HepG2 (cell line): ENCODE measurements at regions of chr3 and their contacts with region 1.

Region 1: DNA sequence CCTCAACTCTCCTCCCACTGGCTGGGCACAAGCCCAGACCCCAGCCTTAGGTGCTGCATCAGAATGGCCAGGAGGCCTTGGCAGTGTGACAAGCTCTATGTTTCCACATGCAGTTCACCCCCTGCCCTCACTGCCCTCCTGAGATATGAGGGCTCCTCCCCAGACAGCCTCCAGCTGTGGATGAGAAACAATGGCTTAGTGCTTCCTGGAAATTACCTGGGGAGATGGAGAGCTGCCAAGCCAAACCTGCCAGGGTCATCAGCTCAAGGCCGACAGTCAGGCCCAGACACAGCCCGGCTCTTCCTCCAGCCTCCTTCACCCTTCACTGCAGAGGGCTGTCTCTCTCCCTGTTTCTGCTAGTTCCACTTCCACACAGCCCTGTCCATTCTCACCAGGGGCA is 76.3 kb downstream of the MYLK start:
- DNase-seq: peak; percentile 80
- ATAC-seq: peak; percentile 75
- H3K4me3 ChIP-seq: peak overlapping the region in 2 of 3 experiments; percentile 20 to 48; a peak in 3 of 6 replicates
- H3K27ac ChIP-seq: peak overlapping the region; percentile 64
- H3K4me1 ChIP-seq: peaks cover 66% of the 10 kb centered on the region
- H3K27me3 ChIP-seq: no peaks in the 10 kb centered on the region
- CTCF ChIP-seq: no peak
- EP300 ChIP-seq: peak in 1 of 2 experiments; percentile 88; a peak in 2 of 4 replicates
- POLR2A ChIP-seq: no peak
- RAD21 ChIP-seq: no peak

Region 2: GRCh38 chr3:123750659-123751420 is 57.0 kb before region 1 on chr3:
- CTCF ChIA-PET with region 1: no interaction called
- POLR2A ChIA-PET with region 1: interaction called, 12 read pairs
- in situ Hi-C with region 1: loop called (anchors 5 kb)
- intact Hi-C with region 1: no loop called
- DNase-seq: peak; percentile 93
- ATAC-seq: peak; percentile 80
- H3K4me3 ChIP-seq: no peak overlapping the region
- H3K27ac ChIP-seq: peak overlapping the region; percentile 76
- H3K4me1 ChIP-seq: peaks cover 67% of the 10 kb centered on the region
- H3K27me3 ChIP-seq: no peaks in the 10 kb centered on the region
- CTCF ChIP-seq: peak; percentile 58
- EP300 ChIP-seq: peak; percentile 68 to 79; a peak in 3 of 4 replicates
- POLR2A ChIP-seq: no peak
- RAD21 ChIP-seq: 0 out of 2 replicates have a peak, but pooled peaks have one; percentile 51

Region 3: DNA sequence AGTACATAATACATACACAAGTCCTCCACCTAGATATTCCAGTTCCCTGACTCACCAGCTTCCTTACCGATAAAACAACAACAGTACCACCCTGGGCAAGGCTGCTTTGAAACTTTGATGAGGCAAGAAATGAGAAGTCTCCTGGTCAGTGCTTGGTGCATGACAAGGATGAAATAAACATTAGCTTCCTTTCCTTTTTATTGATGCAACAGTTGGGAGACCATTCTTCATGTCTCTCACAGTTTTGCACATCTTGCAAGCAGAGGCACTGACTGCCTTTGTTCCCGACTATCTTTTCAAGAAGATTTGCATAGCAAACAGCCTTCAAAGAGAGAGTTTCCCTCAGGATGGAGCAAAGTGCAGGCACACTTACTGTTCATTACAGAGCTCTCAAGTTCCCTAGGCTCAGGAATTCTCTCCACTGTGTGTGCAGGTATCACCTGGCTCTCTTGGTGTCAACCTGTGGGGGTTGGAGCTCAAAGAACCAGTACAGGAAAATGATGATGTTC is 11.2 kb after region 1 on chr3:
- CTCF ChIA-PET with region 1: no interaction called
- POLR2A ChIA-PET with region 1: interaction called, 18 read pairs
- in situ Hi-C with region 1: no loop called
- intact Hi-C with region 1: no loop called
- DNase-seq: peak; percentile 77
- ATAC-seq: peak; percentile 95
- H3K4me3 ChIP-seq: peak overlapping the region in 1 of 3 experiments; percentile 2; a peak in 1 of 6 replicates
- H3K27ac ChIP-seq: peak overlapping the region; percentile 30
- H3K4me1 ChIP-seq: peaks cover 35% of the 10 kb centered on the region
- H3K27me3 ChIP-seq: no peaks in the 10 kb centered on the region
- CTCF ChIP-seq: no peak
- EP300 ChIP-seq: peak in 1 of 2 experiments; percentile 74; a peak in 1 of 4 replicates
- POLR2A ChIP-seq: no peak
- RAD21 ChIP-seq: no peak